Left ventricle myocardium superior (tissue), 1 donor: ENCODE measurements at regions of chr1 and their contacts with region 1.

Region 1: GRCh38 chr1:167066333-167067122 is 23.6 kb downstream of the GPA33 start:
- DNase-seq: peak; percentile 86
- ATAC-seq: peak; percentile 92

Region 2: DNA sequence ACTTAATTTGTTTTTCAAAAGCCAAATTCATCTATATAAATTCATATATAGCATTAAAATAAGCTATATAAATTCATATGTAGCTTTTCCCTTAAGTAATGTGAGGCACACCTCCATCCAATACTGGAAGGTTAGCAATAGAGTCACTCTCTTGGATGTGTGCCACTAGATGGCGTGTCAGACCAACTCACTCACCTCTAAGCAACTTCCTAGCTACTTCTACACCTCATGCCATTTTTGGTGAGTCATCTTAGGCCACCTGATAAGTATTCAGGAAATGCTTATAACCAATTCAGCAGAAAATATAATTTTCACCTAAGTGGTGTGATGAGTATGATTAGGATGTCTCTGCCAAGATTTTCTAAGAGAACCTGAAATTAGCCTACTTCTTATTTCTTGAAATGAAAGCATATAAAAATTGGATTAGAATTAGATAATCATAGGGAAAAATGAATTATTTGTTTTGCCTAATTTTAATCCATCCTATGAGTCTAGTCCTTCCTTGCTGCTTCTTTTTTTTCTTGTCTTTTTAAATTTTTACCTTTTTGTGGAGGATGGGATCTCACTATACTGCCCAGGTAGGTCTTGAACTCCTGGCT is 156.0 kb before region 1 on chr1:
- intact Hi-C with region 1: no loop called
- DNase-seq: peak; percentile 38
- ATAC-seq: peak; percentile 93

Region 3: GRCh38 chr1:167165948-167166689 is 99.6 kb after region 1 on chr1:
- intact Hi-C with region 1: no loop called
- DNase-seq: no peak
- ATAC-seq: no peak

Region 4: GRCh38 chr1:167533851-167534300 is 467.3 kb after region 1 on chr1:
- intact Hi-C with region 1: loop called (anchors 10 kb)
- DNase-seq: peak; percentile 72
- ATAC-seq: peak; percentile 92